ENCODE measurements at regions of chr1 and their contacts with region 1.

Region 1: DNA sequence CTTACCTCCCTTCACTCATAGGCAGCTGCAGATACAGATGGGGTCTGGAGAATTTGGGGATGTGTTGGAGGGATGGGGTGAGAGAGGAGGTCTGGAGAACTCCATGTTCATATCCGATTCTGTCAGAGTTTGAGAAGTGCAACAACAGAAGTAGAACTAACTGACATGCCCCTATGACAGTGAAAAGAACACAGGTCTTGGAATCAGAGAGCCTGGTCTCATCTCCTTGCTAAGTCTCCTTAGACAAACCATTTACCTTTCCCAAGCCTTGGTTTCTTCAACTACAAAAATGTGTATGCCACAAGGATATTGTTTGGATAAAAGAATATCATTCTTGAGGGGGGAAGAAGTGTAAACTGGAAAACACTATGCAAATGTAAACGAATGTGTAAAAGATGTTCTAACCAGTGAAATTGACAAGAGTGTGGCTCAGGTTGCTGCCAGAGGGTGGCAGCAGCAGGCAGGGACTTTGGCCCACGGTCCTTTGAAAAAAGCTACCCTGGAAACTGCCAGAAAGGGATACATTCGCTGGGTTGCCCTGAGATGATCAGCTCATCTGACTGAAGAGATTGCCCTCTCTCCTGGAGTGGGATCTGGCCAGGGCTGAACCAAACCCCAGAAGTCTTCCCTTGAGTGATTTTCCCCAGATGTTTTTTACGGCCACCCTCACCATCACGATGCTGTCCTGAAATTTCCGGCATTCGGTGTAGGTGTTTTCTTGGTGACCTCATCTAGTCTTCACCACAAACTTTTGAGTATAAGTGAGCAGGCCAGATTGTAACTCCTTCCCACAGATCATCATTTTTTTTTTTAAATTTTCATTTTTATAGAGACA is 17.0 kb upstream of the CD2 start:
- DNase-seq: no peak
- ATAC-seq: no peak
- H3K4me3 ChIP-seq: no peak overlapping the region
- H3K27ac ChIP-seq: no peak overlapping the region
- H3K4me1 ChIP-seq: no peaks in the 10 kb centered on the region
- H3K27me3 ChIP-seq: no peaks in the 10 kb centered on the region
- CTCF ChIP-seq: peak in 3 of 5 experiments; percentile 43 to 54 (median 46)
- POLR2A ChIP-seq: no peak

Region 2: GRCh38 chr1:116122955-116123757 is 614.1 kb before region 1 on chr1:
- in situ Hi-C with region 1: no loop called
- intact Hi-C with region 1: no loop called
- DNase-seq: no peak
- ATAC-seq: no peak
- H3K4me3 ChIP-seq: no peak overlapping the region
- H3K27ac ChIP-seq: no peak overlapping the region
- H3K4me1 ChIP-seq: no peaks in the 10 kb centered on the region
- H3K27me3 ChIP-seq: no peaks in the 10 kb centered on the region
- CTCF ChIP-seq: no peak
- POLR2A ChIP-seq: no peak

Region 3: DNA sequence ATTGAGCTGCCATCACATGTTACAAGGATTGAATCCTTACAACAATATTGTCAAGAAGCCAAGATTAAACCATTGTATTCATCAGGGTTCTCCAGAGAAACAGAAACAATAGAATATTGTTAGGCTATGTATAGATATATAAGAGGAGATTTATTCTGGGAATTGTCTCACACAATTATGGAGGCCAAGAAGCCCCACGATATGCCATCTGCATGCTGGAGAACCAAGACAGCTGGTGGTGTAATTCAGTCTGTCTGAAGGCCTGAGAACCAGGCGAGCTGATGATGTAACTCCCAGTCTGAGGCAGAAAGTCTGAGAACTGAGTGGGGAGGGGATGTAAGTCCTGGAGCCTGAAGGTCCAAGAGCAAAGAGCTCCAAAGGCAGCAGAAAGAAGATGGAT is 308.4 kb after region 1 on chr1:
- in situ Hi-C with region 1: loop called (anchors 5 to 10 kb)
- intact Hi-C with region 1: no loop called
- DNase-seq: no peak
- ATAC-seq: no peak
- H3K4me3 ChIP-seq: no peak overlapping the region
- H3K27ac ChIP-seq: no peak overlapping the region
- H3K4me1 ChIP-seq: no peaks in the 10 kb centered on the region
- H3K27me3 ChIP-seq: no peaks in the 10 kb centered on the region
- CTCF ChIP-seq: no peak
- POLR2A ChIP-seq: no peak

Region 4: GRCh38 chr1:117051224-117052064 is 314.2 kb after region 1 on chr1:
- in situ Hi-C with region 1: loop called (anchors 5 to 10 kb)
- intact Hi-C with region 1: loop called (anchors 1 kb)
- DNase-seq: no peak
- ATAC-seq: no peak
- H3K4me3 ChIP-seq: no peak overlapping the region
- H3K27ac ChIP-seq: no peak overlapping the region
- H3K4me1 ChIP-seq: no peaks in the 10 kb centered on the region
- H3K27me3 ChIP-seq: no peaks in the 10 kb centered on the region
- CTCF ChIP-seq: no peak
- POLR2A ChIP-seq: no peak

Region 5: GRCh38 chr1:117137316-117137855 is 400.1 kb after region 1 on chr1:
- in situ Hi-C with region 1: no loop called
- intact Hi-C with region 1: loop called (anchors 10 kb)
- DNase-seq: no peak
- ATAC-seq: no peak
- H3K4me3 ChIP-seq: no peak overlapping the region
- H3K27ac ChIP-seq: no peak overlapping the region
- H3K4me1 ChIP-seq: no peaks in the 10 kb centered on the region
- H3K27me3 ChIP-seq: no peaks in the 10 kb centered on the region
- CTCF ChIP-seq: no peak
- POLR2A ChIP-seq: no peak

Measured in gastrocnemius medialis (tissue), 4 donors.